Activated CD8-positive, alpha-beta memory T cell treated with anti-CD3 and anti-CD28 coated beads, Interleukin-2, amount 10 ng/mL, durations not matched to agents 7 days and 5 days (primary cell): ENCODE measurements at regions of chr16 and their contacts with region 1.

Region 1: DNA sequence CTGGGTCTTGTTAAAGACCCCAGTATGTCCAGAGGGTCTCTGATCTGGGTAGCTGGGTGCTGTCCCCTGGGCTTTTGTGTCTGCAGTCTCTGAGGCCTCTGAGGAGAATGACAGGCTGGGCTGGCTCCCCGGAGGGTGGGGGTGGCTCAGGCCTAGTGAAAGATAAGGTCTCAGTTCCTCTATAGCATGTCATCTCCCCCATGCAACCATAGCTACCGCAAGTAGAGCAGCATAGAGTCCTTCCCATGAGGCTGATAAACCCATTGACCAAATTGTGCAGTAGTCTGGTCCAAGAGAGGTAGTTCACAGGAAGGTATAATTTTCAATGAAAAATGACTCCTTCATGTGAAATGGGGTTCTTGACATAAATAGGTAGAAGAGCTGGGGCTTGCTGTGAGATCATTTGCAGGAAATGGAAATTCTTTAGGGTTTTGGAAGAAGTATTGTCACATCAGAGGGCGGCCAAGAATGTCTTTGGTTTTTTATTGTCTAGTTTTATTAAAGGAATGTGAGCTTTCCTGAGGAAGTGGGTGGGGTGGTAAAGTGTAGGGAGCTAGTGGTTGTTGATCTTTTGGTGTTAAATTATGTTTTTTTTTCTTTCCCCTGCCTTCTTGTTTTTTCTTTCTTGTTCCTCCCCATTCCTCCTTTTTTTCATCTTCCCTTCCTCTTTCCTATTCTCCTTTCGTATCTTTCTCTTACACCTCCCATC is 21.0 kb downstream of the SLC7A6OS start:
- DNase-seq: peak; percentile 79
- ATAC-seq: peak; percentile 76
- H3K4me3 Mint-ChIP-seq: peak overlapping the region; percentile 4
- H3K27ac Mint-ChIP-seq: peak overlapping the region; percentile 84
- H3K4me1 Mint-ChIP-seq: peaks cover 68% of the 10 kb centered on the region
- H3K27me3 Mint-ChIP-seq: no peaks in the 10 kb centered on the region

Region 2: GRCh38 chr16:68237243-68238028 is 52.3 kb before region 1 on chr16:
- CTCF ChIA-PET with region 1: no interaction called
- DNase-seq: peak; percentile 94
- ATAC-seq: peak; percentile 84
- H3K4me3 Mint-ChIP-seq: peak overlapping the region; percentile 82
- H3K27ac Mint-ChIP-seq: peak overlapping the region; percentile 90
- H3K4me1 Mint-ChIP-seq: peaks cover 34% of the 10 kb centered on the region
- H3K27me3 Mint-ChIP-seq: peaks cover 8% of the 10 kb centered on the region

Region 3: DNA sequence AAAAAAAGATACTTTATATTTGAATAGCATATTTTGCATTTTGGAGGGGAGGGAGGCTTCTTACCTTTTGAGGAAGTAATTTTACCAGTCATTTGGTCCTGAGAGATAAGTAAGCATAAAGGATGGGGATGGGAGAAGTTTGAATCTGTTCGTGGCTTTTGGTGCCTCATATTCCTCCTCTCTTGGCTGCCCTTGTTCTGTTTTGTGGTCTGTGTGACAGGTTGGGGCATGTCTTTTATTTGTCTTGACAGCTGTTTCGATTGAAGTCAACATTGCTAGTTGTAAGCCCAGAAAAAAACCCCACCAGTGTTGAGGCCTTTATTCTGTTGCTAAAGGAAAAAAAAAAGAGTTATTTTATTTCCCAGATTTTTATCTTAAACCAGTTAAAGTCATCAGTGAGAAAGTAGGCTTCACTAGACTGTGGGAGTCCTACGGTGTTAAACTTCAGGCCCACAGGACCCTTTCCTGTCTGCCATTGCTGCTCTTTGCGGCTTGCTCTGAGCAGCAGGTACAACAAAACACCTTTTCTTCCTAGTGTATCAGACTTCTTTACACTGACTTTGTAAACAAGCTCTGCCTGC is 14.1 kb before region 1 on chr16:
- CTCF ChIA-PET with region 1: interaction called, 29 read pairs
- DNase-seq: peak; percentile 65
- ATAC-seq: peak; percentile 75
- H3K4me3 Mint-ChIP-seq: peak overlapping the region; percentile 37
- H3K27ac Mint-ChIP-seq: peak overlapping the region; percentile 90
- H3K4me1 Mint-ChIP-seq: peaks cover 60% of the 10 kb centered on the region
- H3K27me3 Mint-ChIP-seq: no peaks in the 10 kb centered on the region